ENCODE measurements at regions of chr17 and their contacts with region 1.

Region 1: DNA sequence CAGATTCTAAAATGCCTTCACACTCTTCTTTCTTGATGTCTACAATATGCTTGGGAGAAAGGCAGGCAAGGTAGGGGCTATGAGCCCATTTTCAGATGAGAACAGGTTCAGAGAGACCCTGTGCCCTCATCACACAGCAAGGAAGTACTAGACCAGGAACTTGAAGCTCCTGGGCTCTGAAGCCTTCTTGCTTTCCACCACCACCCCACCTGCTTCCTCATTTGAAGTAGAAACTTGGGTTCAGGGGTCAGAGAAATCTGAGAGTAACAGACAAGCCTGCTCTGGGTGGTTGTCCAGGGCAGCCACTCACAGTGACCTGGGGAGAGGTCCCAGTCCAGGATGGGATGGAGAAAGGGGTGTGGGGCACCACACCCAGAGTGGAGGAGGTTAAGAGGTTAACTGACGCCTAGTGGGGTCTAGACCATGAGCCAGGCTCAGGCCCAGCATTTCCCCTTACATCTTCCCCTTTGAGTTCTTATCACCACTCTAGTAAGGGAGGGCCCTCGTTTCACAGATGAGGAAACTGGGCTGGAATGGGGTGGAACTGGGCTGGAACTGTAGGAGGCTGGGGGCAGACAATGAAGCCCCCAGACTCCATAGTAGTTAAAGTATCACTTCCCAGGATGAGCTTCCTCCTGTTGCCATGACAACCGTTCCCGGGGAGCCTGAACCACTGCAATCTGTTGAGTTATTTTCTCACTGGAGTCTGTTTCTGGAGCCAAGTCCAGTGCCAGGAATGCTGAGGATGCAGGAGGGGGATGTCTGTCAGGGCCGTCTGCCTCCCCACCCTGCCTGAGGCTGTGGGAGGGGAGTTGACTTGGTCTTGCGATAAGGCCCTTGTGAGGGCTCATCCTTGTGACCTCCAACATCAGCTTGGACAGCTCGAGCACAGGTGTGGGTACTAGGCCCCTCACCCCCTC is 16.2 kb upstream of the PHF12 start:
- DNase-seq: no peak
- H3K4me3 ChIP-seq: no peak overlapping the region
- H3K27ac ChIP-seq: no peak overlapping the region
- H3K4me1 ChIP-seq: peaks cover 36% of the 10 kb centered on the region
- H3K27me3 ChIP-seq: no peaks in the 10 kb centered on the region
- CTCF ChIP-seq: no peak

Region 2: GRCh38 chr17:28940675-28941074 is 26.8 kb before region 1 on chr17:
- CTCF ChIA-PET with region 1: no interaction called
- POLR2A ChIA-PET with region 1: no interaction called
- intact Hi-C with region 1: no loop called
- DNase-seq: peak; percentile 71
- H3K4me3 ChIP-seq: no peak overlapping the region
- H3K27ac ChIP-seq: peak overlapping the region; percentile 28
- H3K4me1 ChIP-seq: peaks cover 57% of the 10 kb centered on the region
- H3K27me3 ChIP-seq: no peaks in the 10 kb centered on the region
- CTCF ChIP-seq: no peak

Region 3: DNA sequence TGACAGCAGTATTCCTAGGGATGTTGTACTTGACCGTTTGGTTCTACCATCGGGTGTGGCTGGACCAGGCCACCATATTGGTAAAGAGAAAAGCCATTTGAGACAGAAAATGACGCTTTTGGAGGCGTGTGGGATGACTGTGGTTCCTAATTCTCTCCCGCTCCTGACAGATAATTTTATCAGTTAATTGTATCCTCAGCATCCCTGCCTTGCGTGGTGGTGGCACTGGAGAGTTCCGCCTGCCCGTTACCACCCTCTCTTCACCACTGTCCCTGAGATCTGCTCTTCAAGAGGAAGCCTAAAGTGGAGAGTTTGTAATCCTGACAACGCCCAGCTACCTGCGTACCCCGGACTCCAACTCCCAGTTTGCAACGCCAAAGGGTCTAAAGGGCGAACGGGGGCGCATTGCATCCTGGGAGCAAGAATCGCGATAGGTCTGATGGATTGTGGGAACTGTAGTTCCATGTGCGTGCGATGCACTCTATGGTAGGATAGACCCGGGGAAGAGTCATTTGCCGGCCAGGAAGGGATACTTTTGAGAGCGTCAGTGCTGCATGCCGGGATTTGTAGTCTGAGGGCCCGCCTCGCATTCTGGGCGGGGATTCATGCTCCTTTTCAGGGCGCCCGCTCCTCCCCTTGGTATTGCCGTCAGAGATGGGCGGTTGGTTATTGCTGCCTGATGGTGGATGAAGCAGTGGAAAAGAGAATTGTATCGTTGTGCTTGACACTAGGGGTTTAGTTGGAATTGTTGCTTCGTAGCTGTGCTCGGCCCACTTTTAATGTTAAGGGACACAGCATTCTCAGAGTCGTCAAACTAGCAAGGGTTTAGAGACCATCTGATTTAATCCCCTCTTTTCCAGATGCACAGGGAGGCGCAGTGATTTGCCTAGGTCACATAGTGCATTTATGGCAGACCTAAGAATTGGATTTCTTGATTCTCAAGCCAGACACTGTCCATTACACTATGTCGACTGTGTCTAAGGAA is 15.2 kb before region 1 on chr17:
- CTCF ChIA-PET with region 1: interaction called, 11 read pairs
- POLR2A ChIA-PET with region 1: no interaction called
- intact Hi-C with region 1: no loop called
- DNase-seq: peak; percentile 100
- H3K4me3 ChIP-seq: peak overlapping the region; percentile 88
- H3K27ac ChIP-seq: peak overlapping the region; percentile 95
- H3K4me1 ChIP-seq: peaks cover 23% of the 10 kb centered on the region
- H3K27me3 ChIP-seq: no peaks in the 10 kb centered on the region
- CTCF ChIP-seq: no peak

Region 4: GRCh38 chr17:28985950-28986713 is 18.7 kb after region 1 on chr17:
- CTCF ChIA-PET with region 1: no interaction called
- POLR2A ChIA-PET with region 1: no interaction called
- intact Hi-C with region 1: no loop called
- DNase-seq: peak; percentile 59
- H3K4me3 ChIP-seq: peak overlapping the region; percentile 5
- H3K27ac ChIP-seq: peak overlapping the region; percentile 15
- H3K4me1 ChIP-seq: peaks cover 64% of the 10 kb centered on the region
- H3K27me3 ChIP-seq: no peaks in the 10 kb centered on the region
- CTCF ChIP-seq: no peak

Region 5: GRCh38 chr17:29024316-29024952 is 57.0 kb after region 1 on chr17:
- CTCF ChIA-PET with region 1: no interaction called
- POLR2A ChIA-PET with region 1: no interaction called
- intact Hi-C with region 1: no loop called
- DNase-seq: no peak
- H3K4me3 ChIP-seq: no peak overlapping the region
- H3K27ac ChIP-seq: no peak overlapping the region
- H3K4me1 ChIP-seq: peaks cover 17% of the 10 kb centered on the region
- H3K27me3 ChIP-seq: no peaks in the 10 kb centered on the region
- CTCF ChIP-seq: no peak

Region 6: GRCh38 chr17:29111816-29112499 is 144.5 kb after region 1 on chr17:
- CTCF ChIA-PET with region 1: interaction called, 309 read pairs
- POLR2A ChIA-PET with region 1: interaction called, 3 read pairs
- intact Hi-C with region 1: loop called (anchors 1 kb)
- DNase-seq: peak; percentile 92
- H3K4me3 ChIP-seq: no peak overlapping the region
- H3K27ac ChIP-seq: peak overlapping the region; percentile 32
- H3K4me1 ChIP-seq: peaks cover 35% of the 10 kb centered on the region
- H3K27me3 ChIP-seq: no peaks in the 10 kb centered on the region
- CTCF ChIP-seq: peak; percentile 99

Region 7: GRCh38 chr17:29116804-29117772 is 149.6 kb after region 1 on chr17:
- CTCF ChIA-PET with region 1: interaction called, 309 read pairs
- POLR2A ChIA-PET with region 1: no interaction called
- intact Hi-C with region 1: loop called (anchors 1 kb)
- DNase-seq: peak; percentile 86
- H3K4me3 ChIP-seq: no peak overlapping the region
- H3K27ac ChIP-seq: no peak overlapping the region
- H3K4me1 ChIP-seq: peaks cover 28% of the 10 kb centered on the region
- H3K27me3 ChIP-seq: no peaks in the 10 kb centered on the region
- CTCF ChIP-seq: peak; percentile 99

Region 8: DNA sequence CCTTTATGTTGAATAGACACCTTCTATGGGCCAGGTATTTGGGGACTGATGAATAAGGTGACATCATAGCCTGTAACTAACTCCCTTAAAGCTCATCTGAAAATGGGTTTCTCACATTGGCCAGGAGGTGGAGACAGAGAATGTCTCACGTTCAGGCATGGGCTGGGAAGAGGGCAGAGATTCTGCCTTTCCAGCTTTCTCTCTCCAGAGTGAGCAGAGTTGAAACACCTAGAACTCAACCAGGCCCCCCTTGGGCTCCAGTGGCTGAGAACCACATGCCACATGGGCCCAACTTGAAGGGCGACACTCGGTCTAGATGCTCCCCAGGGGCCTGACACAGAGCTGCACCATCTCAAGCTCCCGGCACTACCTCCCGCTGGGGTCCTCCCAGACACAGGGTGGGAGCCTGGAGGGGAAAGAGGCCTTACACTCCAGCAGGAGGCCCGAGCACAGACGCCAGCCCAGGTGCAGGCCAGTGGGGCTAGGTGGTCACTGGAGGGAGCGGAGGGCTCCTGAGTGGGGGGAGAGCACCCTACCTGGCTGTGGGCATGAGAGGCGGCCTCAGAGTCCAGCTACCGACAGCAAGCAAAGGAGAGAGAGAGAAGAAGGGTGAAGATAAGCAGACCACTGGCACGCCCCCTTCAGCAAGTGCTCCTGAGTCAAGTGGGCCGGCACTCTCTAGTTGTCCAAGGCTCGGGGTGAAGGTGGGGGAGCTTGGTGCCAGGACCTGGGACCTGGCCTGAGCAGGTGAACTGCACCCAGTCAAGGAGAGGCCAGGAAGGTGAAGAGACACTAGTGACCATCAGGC is 156.8 kb after region 1 on chr17:
- CTCF ChIA-PET with region 1: interaction called, 309 read pairs
- POLR2A ChIA-PET with region 1: no interaction called
- intact Hi-C with region 1: no loop called
- DNase-seq: peak; percentile 87
- H3K4me3 ChIP-seq: no peak overlapping the region
- H3K27ac ChIP-seq: no peak overlapping the region
- H3K4me1 ChIP-seq: no peaks in the 10 kb centered on the region
- H3K27me3 ChIP-seq: no peaks in the 10 kb centered on the region
- CTCF ChIP-seq: peak; percentile 75

Region 9: DNA sequence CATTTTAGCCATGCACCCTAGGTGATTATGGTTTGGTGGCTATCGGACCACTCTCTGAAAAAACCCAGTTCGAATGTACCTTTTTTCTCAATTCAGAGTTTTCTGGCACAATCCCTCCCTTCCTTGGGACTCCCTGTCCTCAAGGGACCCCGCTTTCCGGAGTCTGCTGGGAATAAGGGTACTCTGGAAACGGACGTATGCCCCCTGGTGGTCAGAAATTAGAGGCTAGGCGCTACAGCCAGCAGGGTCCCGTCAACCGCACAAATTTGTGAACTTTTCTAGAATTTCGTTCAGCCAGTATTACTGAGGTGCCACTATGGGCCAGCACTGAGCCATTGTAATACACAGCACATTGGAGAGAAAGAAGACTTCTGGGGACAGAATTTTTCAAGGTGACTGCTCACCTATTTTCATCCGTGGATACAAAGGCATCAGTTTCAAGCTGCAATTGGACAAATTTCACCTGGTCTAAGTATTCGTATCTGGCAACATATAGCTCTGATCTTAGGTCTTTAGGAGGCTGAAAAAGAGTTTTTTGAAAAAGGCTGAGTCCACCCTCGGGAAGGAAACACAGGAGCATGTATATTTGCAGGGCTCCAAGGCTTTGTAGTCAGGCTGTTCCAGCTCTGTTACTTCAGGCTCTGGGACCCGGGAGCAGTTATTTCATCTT is 252.0 kb after region 1 on chr17:
- CTCF ChIA-PET with region 1: interaction called, 3 read pairs
- POLR2A ChIA-PET with region 1: no interaction called
- intact Hi-C with region 1: loop called (anchors 10 kb)
- DNase-seq: peak; percentile 91
- H3K4me3 ChIP-seq: no peak overlapping the region
- H3K27ac ChIP-seq: no peak overlapping the region
- H3K4me1 ChIP-seq: peaks cover 5% of the 10 kb centered on the region
- H3K27me3 ChIP-seq: no peaks in the 10 kb centered on the region
- CTCF ChIP-seq: peak; percentile 96

Region 10: DNA sequence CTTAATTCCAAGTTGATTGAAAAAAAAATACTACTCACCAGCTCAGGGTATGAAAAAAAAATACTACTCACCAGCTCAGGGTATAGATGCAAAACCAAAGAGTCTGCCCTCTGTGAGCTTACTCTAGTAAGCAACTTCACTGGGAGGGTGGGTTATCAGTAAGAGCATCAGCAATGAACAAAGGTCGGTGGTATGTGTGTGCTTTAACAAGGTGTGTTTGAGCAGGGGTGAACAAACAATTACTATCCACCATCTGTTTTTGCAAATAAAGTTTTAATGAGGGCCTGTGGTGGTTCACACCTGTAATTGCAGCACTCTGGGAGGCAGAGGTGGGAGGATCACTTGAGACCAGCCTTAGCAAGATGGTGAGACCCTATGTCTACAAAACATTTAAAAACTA is 306.4 kb after region 1 on chr17:
- CTCF ChIA-PET with region 1: no interaction called
- POLR2A ChIA-PET with region 1: no interaction called
- intact Hi-C with region 1: no loop called
- DNase-seq: no peak
- H3K4me3 ChIP-seq: no peak overlapping the region
- H3K27ac ChIP-seq: no peak overlapping the region
- H3K4me1 ChIP-seq: no peaks in the 10 kb centered on the region
- H3K27me3 ChIP-seq: no peaks in the 10 kb centered on the region
- CTCF ChIP-seq: no peak

Measured in A673 (cell line).